ENCODE measurements at regions of chr1 and their contacts with region 1.

Region 1: GRCh38 chr1:112533029-112533428 is 24.3 kb downstream of the WNT2B start:
- DNase-seq: peak; percentile 92
- H3K4me3 ChIP-seq: no peak overlapping the region
- CTCF ChIP-seq: no peak

Region 2: DNA sequence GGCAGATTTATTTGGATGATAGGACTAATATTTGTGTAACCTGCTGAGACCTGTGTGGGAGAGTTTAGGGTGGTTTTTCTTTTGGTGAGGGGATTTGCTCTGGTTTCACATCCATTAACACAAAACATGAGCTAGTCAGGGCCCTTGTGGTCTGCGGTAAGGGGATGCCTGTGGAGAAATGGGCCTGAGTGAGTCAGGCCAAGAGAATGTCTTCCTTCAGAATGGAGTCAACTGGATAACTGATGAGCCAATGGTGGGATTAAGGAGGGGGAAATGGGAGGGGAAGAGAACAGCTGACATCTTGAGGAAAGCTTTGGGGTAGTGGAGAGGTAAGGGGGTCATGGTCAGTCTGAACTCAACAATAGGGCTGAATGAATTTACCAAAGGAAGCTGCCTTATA is 10.4 kb before region 1 on chr1:
- CTCF ChIA-PET with region 1: interaction called, 14 read pairs
- POLR2A ChIA-PET with region 1: interaction called, 3 read pairs
- DNase-seq: peak; percentile 85
- H3K4me3 ChIP-seq: no peak overlapping the region
- CTCF ChIP-seq: no peak

Region 3: GRCh38 chr1:112544011-112544688 is 11.1 kb after region 1 on chr1:
- CTCF ChIA-PET with region 1: interaction called, 14 read pairs
- POLR2A ChIA-PET with region 1: interaction called, 11 read pairs
- DNase-seq: peak; percentile 87
- H3K4me3 ChIP-seq: no peak overlapping the region
- CTCF ChIP-seq: no peak